ENCODE measurements at regions of chr3 and their contacts with region 1.

Region 1: DNA sequence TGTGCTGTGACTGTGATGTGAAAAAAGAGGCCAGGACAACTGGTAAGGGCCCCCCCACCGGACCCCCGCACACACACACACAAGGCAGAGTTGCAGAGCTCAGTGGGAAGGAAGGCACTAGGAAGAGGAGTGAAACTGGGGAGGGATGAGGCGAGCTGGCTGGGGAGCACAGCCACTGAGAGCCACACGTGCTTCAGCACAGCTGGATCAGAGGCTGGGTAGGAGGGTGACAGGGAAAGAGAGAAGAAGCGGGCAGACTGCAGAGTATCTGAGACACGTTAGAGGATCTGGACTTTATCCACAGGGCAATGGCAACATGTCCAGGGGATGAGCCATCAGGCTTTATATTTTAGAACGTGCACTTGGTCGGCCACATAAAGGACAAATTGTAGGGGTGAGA is 38.0 kb upstream of the TKT start:
- DNase-seq: no peak
- ATAC-seq: no peak
- H3K4me3 ChIP-seq: no peak overlapping the region
- H3K4me3 Mint-ChIP-seq: no peak overlapping the region
- H3K27ac ChIP-seq: no peak overlapping the region
- H3K27ac Mint-ChIP-seq: no peak overlapping the region
- H3K4me1 ChIP-seq: no peaks in the 10 kb centered on the region
- H3K4me1 Mint-ChIP-seq: no peaks in the 10 kb centered on the region
- H3K27me3 ChIP-seq: no peaks in the 10 kb centered on the region
- H3K27me3 Mint-ChIP-seq: no peaks in the 10 kb centered on the region
- CTCF ChIP-seq: no peak

Region 2: GRCh38 chr3:53478166-53478830 is 184.4 kb after region 1 on chr3:
- CTCF ChIA-PET with region 1: no interaction called
- POLR2A ChIA-PET with region 1: no interaction called
- intact Hi-C with region 1: no loop called
- DNase-seq: no peak
- ATAC-seq: no peak
- H3K4me3 ChIP-seq: no peak overlapping the region
- H3K4me3 Mint-ChIP-seq: no peak overlapping the region
- H3K27ac ChIP-seq: no peak overlapping the region
- H3K27ac Mint-ChIP-seq: no peak overlapping the region
- H3K4me1 ChIP-seq: no peaks in the 10 kb centered on the region
- H3K4me1 Mint-ChIP-seq: no peaks in the 10 kb centered on the region
- H3K27me3 ChIP-seq: peaks cover 0 to 10% (median 2%) of the 10 kb centered on the region in 4 experiments
- H3K27me3 Mint-ChIP-seq: peaks cover 36% of the 10 kb centered on the region
- CTCF ChIP-seq: no peak

Region 3: DNA sequence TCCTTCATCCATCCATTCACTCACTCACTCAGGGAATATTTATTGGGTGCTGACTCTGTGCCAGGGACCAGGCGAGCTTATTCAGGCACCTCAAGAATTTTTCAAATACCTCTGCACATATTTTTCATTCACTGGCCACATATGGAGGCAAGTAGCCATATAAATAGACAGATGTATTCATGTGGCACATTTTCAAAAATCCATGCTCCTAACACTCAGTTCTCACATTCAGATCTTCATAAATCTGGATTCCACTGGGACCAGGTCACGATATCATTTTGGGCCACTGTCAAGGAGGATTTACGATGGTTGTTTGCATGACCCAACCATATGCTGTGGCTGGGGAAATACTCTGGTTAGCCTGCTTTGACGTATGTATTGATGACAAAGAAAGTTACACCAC is 1875.7 kb after region 1 on chr3:
- CTCF ChIA-PET with region 1: no interaction called
- POLR2A ChIA-PET with region 1: no interaction called
- intact Hi-C with region 1: loop called (anchors 10 kb)
- DNase-seq: no peak
- ATAC-seq: no peak
- H3K4me3 ChIP-seq: no peak overlapping the region
- H3K4me3 Mint-ChIP-seq: no peak overlapping the region
- H3K27ac ChIP-seq: no peak overlapping the region
- H3K27ac Mint-ChIP-seq: no peak overlapping the region
- H3K4me1 ChIP-seq: no peaks in the 10 kb centered on the region
- H3K4me1 Mint-ChIP-seq: no peaks in the 10 kb centered on the region
- H3K27me3 ChIP-seq: no peaks in the 10 kb centered on the region
- H3K27me3 Mint-ChIP-seq: no peaks in the 10 kb centered on the region
- CTCF ChIP-seq: no peak